Activated CD4-positive, alpha-beta memory T cell treated with anti-CD3 and anti-CD28 coated beads for 36 hours (primary cell): ENCODE measurements at regions of chr5 and their contacts with region 1.

Region 1: GRCh38 chr5:98768160-98769005 is 5.1 kb upstream of the RGMB start:
- DNase-seq: peak; percentile 52
- H3K4me3 Mint-ChIP-seq: peak overlapping the region; percentile 84
- H3K27ac Mint-ChIP-seq: no peak overlapping the region
- H3K4me1 Mint-ChIP-seq: peaks cover 32% of the 10 kb centered on the region
- H3K27me3 Mint-ChIP-seq: peaks cover 32% of the 10 kb centered on the region

Region 2: DNA sequence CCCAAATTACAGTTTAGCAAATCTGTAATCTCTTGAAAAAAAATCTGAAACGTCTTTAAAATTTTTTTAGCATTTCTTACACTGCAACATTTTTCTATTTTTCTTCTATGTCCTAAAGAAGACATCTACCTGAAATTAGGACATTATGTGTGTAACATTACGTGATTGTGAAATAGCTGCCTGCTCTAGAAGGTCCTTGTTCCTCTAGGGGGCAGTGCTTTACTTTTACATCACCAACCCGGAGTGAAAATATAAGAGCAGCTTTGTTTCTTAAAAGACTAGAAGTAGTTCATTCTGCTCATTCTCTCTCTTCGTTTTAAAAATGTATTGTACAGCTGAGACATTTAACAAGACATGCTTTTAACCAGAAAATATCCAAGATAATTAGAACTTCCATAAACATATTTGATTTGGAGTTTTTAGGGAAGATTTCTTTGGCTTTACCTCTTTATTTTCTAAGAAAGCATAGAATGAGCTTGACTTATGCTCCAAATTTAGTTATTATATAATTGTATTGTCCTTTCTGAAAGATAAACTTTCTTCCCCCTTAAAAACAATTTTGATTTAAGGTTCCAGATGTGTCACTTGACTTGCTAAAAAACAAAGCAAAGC is 1537.3 kb before region 1 on chr5:
- CTCF ChIA-PET with region 1: interaction called, 14 read pairs
- POLR2A ChIA-PET with region 1: no interaction called
- intact Hi-C with region 1: loop called (anchors 1 kb)
- DNase-seq: peak; percentile 14
- H3K4me3 Mint-ChIP-seq: no peak overlapping the region
- H3K27ac Mint-ChIP-seq: no peak overlapping the region
- H3K4me1 Mint-ChIP-seq: no peaks in the 10 kb centered on the region
- H3K27me3 Mint-ChIP-seq: peaks cover 4% of the 10 kb centered on the region

Region 3: GRCh38 chr5:98614341-98614740 is 154.0 kb before region 1 on chr5:
- CTCF ChIA-PET with region 1: no interaction called
- POLR2A ChIA-PET with region 1: no interaction called
- intact Hi-C with region 1: no loop called
- DNase-seq: no peak
- H3K4me3 Mint-ChIP-seq: no peak overlapping the region
- H3K27ac Mint-ChIP-seq: no peak overlapping the region
- H3K4me1 Mint-ChIP-seq: no peaks in the 10 kb centered on the region
- H3K27me3 Mint-ChIP-seq: peaks cover 2% of the 10 kb centered on the region

Region 4: GRCh38 chr5:98780390-98780789 is 12.0 kb after region 1 on chr5:
- CTCF ChIA-PET with region 1: interaction called, 36 read pairs
- POLR2A ChIA-PET with region 1: no interaction called
- intact Hi-C with region 1: no loop called
- DNase-seq: no peak
- H3K4me3 Mint-ChIP-seq: no peak overlapping the region
- H3K27ac Mint-ChIP-seq: no peak overlapping the region
- H3K4me1 Mint-ChIP-seq: peaks cover 23% of the 10 kb centered on the region
- H3K27me3 Mint-ChIP-seq: peaks cover 5% of the 10 kb centered on the region

Region 5: GRCh38 chr5:98796197-98796972 is 28.0 kb after region 1 on chr5:
- CTCF ChIA-PET with region 1: interaction called, 88 read pairs
- POLR2A ChIA-PET with region 1: no interaction called
- intact Hi-C with region 1: loop called (anchors 1 kb)
- DNase-seq: peak; percentile 67
- H3K4me3 Mint-ChIP-seq: no peak overlapping the region
- H3K27ac Mint-ChIP-seq: no peak overlapping the region
- H3K4me1 Mint-ChIP-seq: peaks cover 4% of the 10 kb centered on the region
- H3K27me3 Mint-ChIP-seq: no peaks in the 10 kb centered on the region

Region 6: GRCh38 chr5:99060306-99061261 is 292.2 kb after region 1 on chr5:
- CTCF ChIA-PET with region 1: interaction called, 5 read pairs
- POLR2A ChIA-PET with region 1: no interaction called
- intact Hi-C with region 1: loop called (anchors 1 kb)
- DNase-seq: peak; percentile 88
- H3K4me3 Mint-ChIP-seq: no peak overlapping the region
- H3K27ac Mint-ChIP-seq: no peak overlapping the region
- H3K4me1 Mint-ChIP-seq: peaks cover 6% of the 10 kb centered on the region
- H3K27me3 Mint-ChIP-seq: peaks cover 1% of the 10 kb centered on the region